Naive thymus-derived CD4-positive, alpha-beta T cell (primary cell): ENCODE measurements at regions of chr18 and their contacts with region 1.

Region 1: GRCh38 chr18:13726232-13726971 is at the starts of genes FAM210A and RNMT:
- DNase-seq: peak; percentile 82 to 95 (median 93)
- ATAC-seq: peak; percentile 96
- H3K4me3 ChIP-seq: peak within 1 kb of the TSS; percentile 95
- H3K4me3 Mint-ChIP-seq: peak within 1 kb of the TSS; percentile 85 to 97 (median 90)
- H3K27ac ChIP-seq: peak within 1 kb of the TSS; percentile 98
- H3K27ac Mint-ChIP-seq: peak within 1 kb of the TSS; percentile 82 to 99 (median 96)
- H3K4me1 ChIP-seq: peaks cover 17 to 38% of the 10 kb centered on the region in 2 donors
- H3K4me1 Mint-ChIP-seq: peaks cover 43 to 69% (median 60%) of the 10 kb centered on the region in 7 donors
- H3K27me3 ChIP-seq: no peaks in the 10 kb centered on the region
- H3K27me3 Mint-ChIP-seq: no peaks in the 10 kb centered on the region
- total RNA-seq, gene FAM210A: 5.9 to 31.5 (median 8.1) TPM
- total RNA-seq, gene RNMT: 47.0 to 101 (median 53.7) TPM

Region 2: GRCh38 chr18:12702221-12703095 is 1023.9 kb before region 1 on chr18 and contains the starts of genes CEP76 and PSMG2:
- CTCF ChIA-PET with region 1: no interaction called
- POLR2A ChIA-PET with region 1: no interaction called
- intact Hi-C with region 1: loop called in 1 of 2 experiments (anchors 10 kb)
- DNase-seq: peak; percentile 77 to 88 (median 84)
- ATAC-seq: peak; percentile 89
- H3K4me3 ChIP-seq: peak within 1 kb of the TSS; percentile 97
- H3K4me3 Mint-ChIP-seq: peak within 1 kb of the TSS; percentile 92 to 99 (median 98)
- H3K27ac ChIP-seq: peak within 1 kb of the TSS; percentile 96
- H3K27ac Mint-ChIP-seq: peak within 1 kb of the TSS; percentile 91 to 100 (median 96)
- H3K4me1 ChIP-seq: peaks cover 17 to 20% of the 10 kb centered on the region in 2 donors
- H3K4me1 Mint-ChIP-seq: peaks cover 36 to 63% (median 50%) of the 10 kb centered on the region in 7 donors
- H3K27me3 ChIP-seq: no peaks in the 10 kb centered on the region
- H3K27me3 Mint-ChIP-seq: no peaks in the 10 kb centered on the region
- total RNA-seq, gene CEP76: 6.9 to 13.2 (median 11.1) TPM
- total RNA-seq, gene PSMG2: 49.9 to 104 (median 59.9) TPM

Region 3: GRCh38 chr18:13137670-13138419 is 588.6 kb before region 1 on chr18:
- CTCF ChIA-PET with region 1: no interaction called
- POLR2A ChIA-PET with region 1: no interaction called
- intact Hi-C with region 1: loop called (anchors 1 kb)
- DNase-seq: peak; percentile 26 to 86 (median 77)
- ATAC-seq: peak; percentile 94
- H3K4me3 ChIP-seq: peak overlapping the region; percentile 83
- H3K4me3 Mint-ChIP-seq: peak overlapping the region; percentile 92 to 100 (median 99)
- H3K27ac ChIP-seq: peak overlapping the region; percentile 75
- H3K27ac Mint-ChIP-seq: peak overlapping the region; percentile 93 to 98 (median 97)
- H3K4me1 ChIP-seq: peaks cover 0 to 7% of the 10 kb centered on the region in 2 donors
- H3K4me1 Mint-ChIP-seq: peaks cover 12 to 32% (median 28%) of the 10 kb centered on the region in 7 donors
- H3K27me3 ChIP-seq: no peaks in the 10 kb centered on the region
- H3K27me3 Mint-ChIP-seq: peaks cover 0 to 22% (median 0%) of the 10 kb centered on the region in 5 donors

Region 4: DNA sequence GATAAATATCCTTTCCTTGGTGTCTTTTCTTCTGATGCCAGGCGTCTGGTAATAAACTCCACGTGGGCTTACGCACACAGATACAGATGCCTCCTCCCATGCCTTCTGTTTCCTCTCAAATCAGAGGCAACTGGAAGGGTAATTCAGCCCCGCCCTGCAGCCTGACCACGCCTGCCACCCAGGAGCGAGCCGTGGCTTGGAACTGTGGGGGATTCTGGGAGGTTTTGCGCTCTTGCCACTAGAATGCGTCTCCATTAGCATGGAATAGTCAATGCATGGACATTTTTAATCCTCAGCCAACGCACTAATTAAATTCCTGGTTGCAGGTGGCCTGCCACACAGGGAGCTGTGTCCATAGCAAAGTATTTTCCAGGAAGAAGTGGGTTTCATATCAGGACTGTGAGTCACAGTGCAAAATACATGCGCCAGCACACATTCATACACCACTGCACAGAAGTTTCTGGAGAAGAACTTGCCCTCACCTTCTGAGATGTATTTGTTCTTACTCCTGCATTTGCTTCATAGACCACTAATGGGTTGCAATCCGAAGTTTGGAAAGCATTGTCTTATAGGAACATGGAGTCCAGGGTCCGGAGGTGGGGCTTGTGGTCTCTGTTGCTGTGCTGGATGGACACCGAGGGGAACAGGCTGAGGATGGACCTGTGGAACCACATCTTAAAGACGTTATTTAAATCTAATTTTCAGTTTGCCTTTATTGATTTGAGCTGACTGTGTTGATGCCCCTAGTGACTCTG is 356.5 kb before region 1 on chr18:
- CTCF ChIA-PET with region 1: no interaction called
- POLR2A ChIA-PET with region 1: no interaction called
- intact Hi-C with region 1: no loop called
- DNase-seq: peak in 5 of 9 donors; percentile 17 to 45 (median 36)
- ATAC-seq: peak; percentile 51
- H3K4me3 ChIP-seq: no peak overlapping the region
- H3K4me3 Mint-ChIP-seq: peak overlapping the region in 9 of 10 donors; percentile 23 to 63 (median 37)
- H3K27ac ChIP-seq: no peak overlapping the region
- H3K27ac Mint-ChIP-seq: peak overlapping the region in 8 of 9 donors; percentile 12 to 86 (median 72)
- H3K4me1 ChIP-seq: peaks cover 0 to 35% of the 10 kb centered on the region in 2 donors
- H3K4me1 Mint-ChIP-seq: peaks cover 12 to 59% (median 48%) of the 10 kb centered on the region in 7 donors
- H3K27me3 ChIP-seq: no peaks in the 10 kb centered on the region
- H3K27me3 Mint-ChIP-seq: no peaks in the 10 kb centered on the region

Region 5: DNA sequence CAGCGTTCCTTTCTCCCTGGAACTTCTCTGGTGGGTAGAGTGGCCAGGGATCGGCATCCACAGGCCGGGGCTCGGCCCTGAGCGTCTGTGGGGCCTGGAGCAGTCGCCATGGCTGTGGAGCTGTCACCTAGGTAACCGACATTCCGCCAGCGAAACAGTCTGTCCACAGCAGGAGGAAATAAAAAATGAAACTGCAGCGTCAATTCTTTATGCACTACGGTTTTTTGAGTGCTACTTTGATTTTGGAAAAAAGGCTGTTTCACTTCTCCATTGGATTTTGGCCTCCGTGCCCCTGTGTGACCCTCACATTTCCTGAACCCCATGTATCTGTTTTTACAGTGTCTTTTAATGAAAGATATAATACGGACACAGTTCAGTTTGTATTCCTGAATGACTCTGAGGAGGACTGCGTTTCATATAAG is 344.4 kb before region 1 on chr18:
- CTCF ChIA-PET with region 1: no interaction called
- POLR2A ChIA-PET with region 1: no interaction called
- intact Hi-C with region 1: loop called in 1 of 2 experiments (anchors 1 kb)
- DNase-seq: peak in 7 of 9 donors; percentile 51 to 67 (median 62)
- ATAC-seq: peak; percentile 67
- H3K4me3 ChIP-seq: peak overlapping the region; percentile 57
- H3K4me3 Mint-ChIP-seq: peak overlapping the region; percentile 83 to 94 (median 92)
- H3K27ac ChIP-seq: peak overlapping the region; percentile 93
- H3K27ac Mint-ChIP-seq: peak overlapping the region; percentile 97 to 100 (median 99)
- H3K4me1 ChIP-seq: peaks cover 18 to 54% of the 10 kb centered on the region in 2 donors
- H3K4me1 Mint-ChIP-seq: peaks cover 41 to 83% (median 79%) of the 10 kb centered on the region in 7 donors
- H3K27me3 ChIP-seq: no peaks in the 10 kb centered on the region
- H3K27me3 Mint-ChIP-seq: no peaks in the 10 kb centered on the region

Region 6: DNA sequence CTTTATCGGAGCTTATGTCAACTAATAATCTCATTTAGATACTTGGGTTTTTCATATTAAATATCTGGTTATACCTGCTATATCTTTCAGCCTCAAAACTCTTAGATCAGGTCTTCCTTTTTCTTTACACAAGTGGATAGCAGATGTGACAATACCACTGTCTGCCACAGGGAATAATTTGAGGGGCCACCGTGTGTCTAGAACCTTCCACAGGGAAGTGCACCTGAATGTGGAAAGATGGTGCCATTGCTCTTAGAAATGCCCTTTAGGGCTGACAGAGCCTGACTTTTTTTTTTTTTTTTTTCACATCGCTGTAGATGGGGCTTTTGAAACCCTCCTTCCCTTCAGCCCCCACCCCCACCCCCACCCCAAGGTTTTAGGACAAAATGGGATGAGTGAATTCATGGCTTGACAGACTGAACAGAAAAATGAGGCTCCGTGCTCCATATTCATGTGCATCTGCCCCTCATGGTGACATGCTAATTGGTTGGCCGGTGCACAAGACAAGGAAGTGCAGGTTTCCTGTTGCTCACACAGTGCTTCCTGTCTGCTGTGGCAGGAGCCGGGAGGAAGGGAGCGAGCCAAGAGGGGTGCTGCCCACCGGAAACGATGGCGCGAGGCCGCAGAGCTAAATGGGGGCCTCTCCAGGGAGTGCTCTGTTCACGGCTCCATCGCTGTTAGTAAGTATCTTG is 261.8 kb before region 1 on chr18:
- CTCF ChIA-PET with region 1: no interaction called
- POLR2A ChIA-PET with region 1: no interaction called
- intact Hi-C with region 1: loop called (anchors 1 to 10 kb)
- DNase-seq: peak; percentile 37 to 70 (median 64)
- ATAC-seq: peak; percentile 93
- H3K4me3 ChIP-seq: peak overlapping the region; percentile 66
- H3K4me3 Mint-ChIP-seq: peak overlapping the region; percentile 87 to 100 (median 94)
- H3K27ac ChIP-seq: peak overlapping the region; percentile 66
- H3K27ac Mint-ChIP-seq: peak overlapping the region; percentile 88 to 99 (median 95)
- H3K4me1 ChIP-seq: peaks cover 16 to 45% of the 10 kb centered on the region in 2 donors
- H3K4me1 Mint-ChIP-seq: peaks cover 43 to 85% (median 83%) of the 10 kb centered on the region in 7 donors
- H3K27me3 ChIP-seq: no peaks in the 10 kb centered on the region
- H3K27me3 Mint-ChIP-seq: no peaks in the 10 kb centered on the region

Region 7: GRCh38 chr18:13558124-13558523 is 168.3 kb before region 1 on chr18:
- CTCF ChIA-PET with region 1: no interaction called
- POLR2A ChIA-PET with region 1: no interaction called
- intact Hi-C with region 1: loop called (anchors 1 to 2 kb)
- DNase-seq: peak in 2 of 9 donors; percentile 7 to 16
- ATAC-seq: peak; percentile 69
- H3K4me3 ChIP-seq: no peak overlapping the region
- H3K4me3 Mint-ChIP-seq: peak overlapping the region in 1 of 10 donors; percentile 52
- H3K27ac ChIP-seq: no peak overlapping the region
- H3K27ac Mint-ChIP-seq: peak overlapping the region in 3 of 9 donors; percentile 60 to 84 (median 82)
- H3K4me1 ChIP-seq: peaks cover 0 to 6% of the 10 kb centered on the region in 2 donors
- H3K4me1 Mint-ChIP-seq: peaks cover 11 to 44% (median 29%) of the 10 kb centered on the region in 7 donors
- H3K27me3 ChIP-seq: no peaks in the 10 kb centered on the region
- H3K27me3 Mint-ChIP-seq: no peaks in the 10 kb centered on the region

Region 8: GRCh38 chr18:13710460-13710859 is 15.9 kb before region 1 on chr18:
- CTCF ChIA-PET with region 1: no interaction called
- POLR2A ChIA-PET with region 1: no interaction called
- intact Hi-C with region 1: no loop called
- DNase-seq: no peak
- ATAC-seq: no peak
- H3K4me3 ChIP-seq: no peak overlapping the region
- H3K4me3 Mint-ChIP-seq: no peak overlapping the region
- H3K27ac ChIP-seq: no peak overlapping the region
- H3K27ac Mint-ChIP-seq: no peak overlapping the region
- H3K4me1 ChIP-seq: no peaks in the 10 kb centered on the region
- H3K4me1 Mint-ChIP-seq: peaks cover 2 to 35% (median 17%) of the 10 kb centered on the region in 7 donors
- H3K27me3 ChIP-seq: no peaks in the 10 kb centered on the region
- H3K27me3 Mint-ChIP-seq: no peaks in the 10 kb centered on the region

Region 9: GRCh38 chr18:14179305-14179704 is 452.9 kb after region 1 on chr18:
- CTCF ChIA-PET with region 1: no interaction called
- POLR2A ChIA-PET with region 1: no interaction called
- intact Hi-C with region 1: loop called in 1 of 2 experiments (anchors 1 kb)
- DNase-seq: peak in 2 of 9 donors; percentile 5 to 8
- ATAC-seq: peak; percentile 23
- H3K4me3 ChIP-seq: peak overlapping the region; percentile 55
- H3K4me3 Mint-ChIP-seq: peak overlapping the region; percentile 80 to 94 (median 89)
- H3K27ac ChIP-seq: peak overlapping the region; percentile 21
- H3K27ac Mint-ChIP-seq: peak overlapping the region in 7 of 9 donors; percentile 40 to 92 (median 71)
- H3K4me1 ChIP-seq: no peaks in the 10 kb centered on the region
- H3K4me1 Mint-ChIP-seq: peaks cover 0 to 7% (median 6%) of the 10 kb centered on the region in 7 donors
- H3K27me3 ChIP-seq: no peaks in the 10 kb centered on the region
- H3K27me3 Mint-ChIP-seq: peaks cover 0 to 20% (median 0%) of the 10 kb centered on the region in 5 donors